ENCODE measurements at regions of chr19 and their contacts with region 1.

Region 1: GRCh38 chr19:19366612-19367396 is 38.7 kb upstream of the GATAD2A start:
- DNase-seq: peak; percentile 84
- ATAC-seq: peak; percentile 78

Region 2: DNA sequence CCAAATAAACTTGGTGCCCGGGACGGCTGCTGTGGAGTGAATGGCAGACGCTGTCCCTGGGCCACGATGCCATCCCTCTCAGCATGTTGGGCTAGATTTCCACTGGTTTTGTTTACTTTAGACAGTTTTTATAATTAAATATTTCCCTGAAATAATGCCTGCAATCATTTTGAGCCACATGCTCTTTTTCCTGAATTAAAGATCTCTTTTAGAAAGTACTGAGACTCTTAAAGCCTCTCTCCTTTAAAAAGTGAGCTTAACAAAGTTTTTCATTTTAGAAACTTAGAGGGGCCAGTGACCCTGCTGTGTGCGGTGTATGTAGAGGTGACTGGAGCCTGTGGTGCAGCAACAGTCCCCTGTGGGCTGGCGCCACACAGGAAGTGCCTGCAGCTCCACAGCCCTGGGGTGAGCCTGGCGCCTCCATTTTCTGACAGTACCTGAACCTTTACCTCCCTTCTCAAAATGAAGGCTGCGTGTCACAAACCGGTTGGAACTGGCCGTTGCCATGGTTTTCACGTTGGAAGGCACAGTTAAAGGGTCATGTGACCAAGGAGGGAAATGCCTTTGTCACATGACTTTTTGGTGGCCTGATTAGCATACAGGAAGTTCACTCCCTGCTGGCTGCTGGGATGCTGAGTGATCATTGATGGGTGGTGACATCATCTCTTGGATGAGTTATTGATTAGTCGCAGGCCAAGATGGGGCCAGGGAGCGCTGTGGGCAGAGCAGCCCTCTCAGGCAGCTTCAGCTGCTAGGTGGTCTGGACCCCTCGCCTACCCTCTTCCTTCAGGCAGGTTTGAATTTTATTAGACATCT is 122.3 kb after region 1 on chr19:
- intact Hi-C with region 1: loop called (anchors 1 kb)
- DNase-seq: peak; percentile 90
- ATAC-seq: peak; percentile 61

Region 3: DNA sequence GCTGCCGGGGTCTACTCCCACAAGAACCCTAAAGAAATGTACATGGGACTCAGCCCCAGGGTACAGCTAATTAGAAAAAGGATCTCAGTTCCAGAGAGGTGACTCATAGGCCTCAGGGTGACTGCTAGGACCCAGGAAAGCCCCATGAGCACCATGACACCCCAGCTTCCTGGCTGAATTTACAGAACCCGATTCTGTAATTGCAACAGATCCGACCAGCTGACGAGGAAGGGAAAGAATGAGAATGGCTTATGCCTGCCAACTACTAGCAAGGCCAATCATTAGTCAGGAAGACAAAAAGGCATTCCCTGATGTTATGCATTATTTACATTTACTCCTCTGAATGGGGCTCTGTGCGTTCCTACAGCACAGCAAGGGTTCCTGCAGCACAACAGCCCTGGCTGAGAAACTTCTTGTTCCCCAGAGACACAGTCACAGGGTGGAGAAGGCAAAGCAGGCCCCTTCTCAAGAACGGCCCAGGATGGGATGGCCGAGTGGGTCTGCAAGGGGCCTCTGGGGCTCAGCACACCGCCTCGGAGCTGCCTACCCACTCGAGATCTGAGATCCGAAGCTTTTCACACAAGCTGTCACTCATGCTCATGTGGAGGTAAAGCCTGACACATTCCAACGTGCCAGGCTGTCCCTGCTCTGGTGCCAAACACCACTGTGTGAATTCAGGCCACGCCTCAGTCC is 224.5 kb after region 1 on chr19:
- intact Hi-C with region 1: no loop called
- DNase-seq: no peak
- ATAC-seq: no peak

Measured in Right ventricle myocardium inferior (tissue), 1 donor.